Endothelial cell of umbilical vein (primary cell): ENCODE measurements at regions of chr19 and their contacts with region 1.

Region 1: DNA sequence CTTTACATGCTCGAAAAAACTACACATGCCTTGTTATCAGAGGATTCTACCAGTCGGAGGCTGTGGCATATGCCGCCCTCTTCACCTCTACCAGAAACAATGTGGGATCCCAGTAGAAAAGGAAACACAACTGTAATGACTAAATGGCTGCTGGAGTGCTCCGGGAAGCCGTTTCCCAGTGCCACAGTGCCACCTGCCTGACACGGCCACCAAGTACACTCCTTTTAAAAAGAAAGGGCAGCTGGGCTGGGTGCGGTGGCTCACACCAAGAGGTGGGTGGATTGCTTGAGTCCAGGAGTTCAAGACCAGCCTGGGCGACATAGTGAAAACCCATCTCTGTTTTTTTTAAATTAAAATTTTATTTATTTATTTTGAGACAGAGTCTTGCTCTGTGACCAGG is 67.3 kb downstream of the TRPM4 start:
- DNase-seq: peak; percentile 80
- H3K4me3 ChIP-seq: no peak overlapping the region
- H3K27ac ChIP-seq: no peak overlapping the region
- H3K4me1 ChIP-seq: no peaks in the 10 kb centered on the region
- H3K27me3 ChIP-seq: no peaks in the 10 kb centered on the region
- CTCF ChIP-seq: peak; percentile 51 to 66
- POLR2A ChIP-seq: no peak

Region 2: GRCh38 chr19:49073514-49074378 is 151.1 kb before region 1 on chr19:
- CTCF ChIA-PET with region 1: interaction called, 18 read pairs
- POLR2A ChIA-PET with region 1: no interaction called
- dilution Hi-C with region 1: no loop called
- intact Hi-C with region 1: loop called (anchors 1 kb)
- DNase-seq: no peak
- H3K4me3 ChIP-seq: no peak overlapping the region
- H3K27ac ChIP-seq: no peak overlapping the region
- H3K4me1 ChIP-seq: no peaks in the 10 kb centered on the region
- H3K27me3 ChIP-seq: peaks cover 22 to 24% of the 10 kb centered on the region in 2 experiments
- CTCF ChIP-seq: peak in 1 of 2 donors; percentile 8
- POLR2A ChIP-seq: no peak

Region 3: DNA sequence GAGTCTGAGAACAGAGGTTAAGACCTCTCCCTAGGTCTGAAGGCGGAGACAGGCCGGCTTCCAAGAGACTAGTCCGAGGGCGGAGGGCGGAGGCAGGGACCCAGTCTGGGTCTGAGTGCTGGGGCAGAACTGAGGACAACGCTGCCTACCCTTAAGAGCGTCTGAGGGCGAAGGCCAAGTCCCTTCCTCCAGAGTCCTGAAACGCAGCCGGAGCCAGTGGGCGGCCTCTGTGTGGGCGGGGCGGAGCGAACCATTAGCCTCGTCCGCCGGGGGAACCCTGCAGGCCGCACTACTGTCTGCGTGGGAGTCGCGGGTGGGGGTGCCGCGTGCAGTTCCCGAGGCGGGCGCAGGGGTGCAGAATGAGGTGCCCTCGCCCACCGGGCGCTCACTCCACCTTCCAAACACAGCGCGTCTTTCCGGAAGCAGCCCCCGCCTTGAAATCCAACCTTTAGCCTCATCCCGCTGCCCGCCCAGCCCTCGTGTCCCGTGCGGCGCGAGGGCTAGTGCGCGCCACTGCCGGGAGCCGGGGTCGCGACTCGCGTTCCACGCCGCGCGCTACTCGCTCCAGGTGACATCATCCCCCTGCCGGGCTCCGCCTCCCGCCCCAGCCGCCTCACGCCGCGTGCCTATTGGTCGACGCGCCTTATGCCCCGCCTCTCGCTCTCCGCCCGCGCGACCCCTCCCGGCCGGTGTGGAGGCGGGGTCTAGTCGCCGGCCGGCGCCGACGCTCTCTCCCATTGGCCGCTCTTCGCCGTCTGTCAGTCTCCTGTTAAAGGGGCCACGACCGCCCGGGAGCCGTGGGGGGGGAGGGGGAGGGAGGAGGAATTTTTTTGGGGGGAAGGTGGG is 106.1 kb before region 1 on chr19 and contains the start of gene C19orf73:
- CTCF ChIA-PET with region 1: interaction called, 13 read pairs
- POLR2A ChIA-PET with region 1: no interaction called
- dilution Hi-C with region 1: no loop called
- intact Hi-C with region 1: no loop called
- DNase-seq: peak; percentile 94
- H3K4me3 ChIP-seq: peak within 1 kb of the TSS; percentile 16 to 65 (median 57)
- H3K27ac ChIP-seq: peak within 1 kb of the TSS; percentile 63
- H3K4me1 ChIP-seq: peaks cover 14% of the 10 kb centered on the region
- H3K27me3 ChIP-seq: peaks cover 4 to 8% of the 10 kb centered on the region in 2 experiments
- CTCF ChIP-seq: peak in 1 of 2 donors; percentile 7
- POLR2A ChIP-seq: peak; percentile 53
- total RNA-seq, gene C19orf73: 1.5 TPM in 1 of 2 replicates, not detected in the other

Region 4: GRCh38 chr19:49271080-49271762 is 46.4 kb after region 1 on chr19:
- CTCF ChIA-PET with region 1: interaction called, 3 read pairs
- POLR2A ChIA-PET with region 1: no interaction called
- dilution Hi-C with region 1: no loop called
- intact Hi-C with region 1: loop called (anchors 1 kb)
- DNase-seq: no peak
- H3K4me3 ChIP-seq: no peak overlapping the region
- H3K27ac ChIP-seq: no peak overlapping the region
- H3K4me1 ChIP-seq: no peaks in the 10 kb centered on the region
- H3K27me3 ChIP-seq: peaks cover 0 to 6% of the 10 kb centered on the region in 2 experiments
- CTCF ChIP-seq: no peak
- POLR2A ChIP-seq: no peak

Region 5: DNA sequence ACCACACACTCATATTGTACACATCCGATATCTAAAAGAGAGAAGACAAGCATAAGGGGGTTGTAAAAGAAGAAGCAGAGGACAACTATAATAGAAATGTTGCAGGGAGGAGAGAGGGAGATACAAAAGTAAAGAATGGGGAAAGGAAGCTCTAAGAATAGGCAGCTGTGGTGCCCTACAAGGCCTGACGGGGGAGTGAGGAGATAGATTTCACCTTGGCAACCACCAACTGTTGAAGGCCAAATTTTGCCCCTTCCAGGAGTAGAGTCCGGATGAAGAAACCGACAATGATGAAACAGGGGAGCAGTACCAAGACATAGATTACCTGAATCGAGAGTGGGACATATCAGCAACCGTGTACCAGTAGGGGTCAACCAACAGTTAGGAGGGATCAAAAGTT is 84.2 kb after region 1 on chr19:
- CTCF ChIA-PET with region 1: no interaction called
- POLR2A ChIA-PET with region 1: no interaction called
- dilution Hi-C with region 1: no loop called
- intact Hi-C with region 1: no loop called
- DNase-seq: no peak
- H3K4me3 ChIP-seq: no peak overlapping the region
- H3K27ac ChIP-seq: no peak overlapping the region
- H3K4me1 ChIP-seq: no peaks in the 10 kb centered on the region
- H3K27me3 ChIP-seq: no peaks in the 10 kb centered on the region
- CTCF ChIP-seq: no peak
- POLR2A ChIP-seq: no peak

Region 6: DNA sequence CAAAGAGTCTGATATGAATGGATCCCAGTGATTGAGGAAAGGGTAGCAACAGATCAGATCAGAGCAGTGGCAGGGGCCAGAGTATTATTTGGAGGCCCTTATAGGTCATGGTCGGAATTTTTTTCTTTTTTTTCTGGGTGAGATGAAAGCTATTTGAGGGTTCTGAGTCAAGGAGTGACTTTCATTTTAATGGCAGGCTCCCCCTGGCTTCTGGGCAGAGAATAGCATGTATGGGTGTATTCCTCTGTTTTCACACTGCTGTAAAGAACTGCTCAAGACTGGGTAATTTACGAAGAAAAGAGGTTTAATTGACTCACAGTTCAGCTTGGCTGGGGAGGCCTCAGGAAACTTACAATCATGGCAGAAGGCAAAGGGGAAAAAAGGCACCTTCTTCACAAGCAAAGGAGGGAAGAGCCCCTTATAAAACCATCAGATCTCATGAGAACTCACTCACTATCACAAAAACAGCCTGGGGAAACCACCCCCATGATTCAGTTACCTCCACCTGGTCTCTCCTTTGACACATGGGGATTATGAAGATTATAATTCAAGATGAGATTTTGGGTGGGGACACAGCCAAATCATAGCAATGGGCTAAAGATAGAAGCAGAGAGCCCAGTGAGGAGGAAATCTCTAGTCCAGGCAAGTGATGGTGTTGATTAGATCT is 103.2 kb after region 1 on chr19:
- CTCF ChIA-PET with region 1: interaction called, 11 read pairs
- POLR2A ChIA-PET with region 1: no interaction called
- dilution Hi-C with region 1: no loop called
- intact Hi-C with region 1: loop called (anchors 1 kb)
- DNase-seq: peak; percentile 34
- H3K4me3 ChIP-seq: no peak overlapping the region
- H3K27ac ChIP-seq: no peak overlapping the region
- H3K4me1 ChIP-seq: no peaks in the 10 kb centered on the region
- H3K27me3 ChIP-seq: no peaks in the 10 kb centered on the region
- CTCF ChIP-seq: peak; percentile 50 to 65
- POLR2A ChIP-seq: no peak